A673 (cell line): ENCODE measurements at regions of chr4 and their contacts with region 1.

Region 1: GRCh38 chr4:153643406-153644383 is 40.4 kb upstream of the TLR2 start:
- DNase-seq: peak; percentile 80
- H3K4me3 ChIP-seq: no peak overlapping the region
- H3K27ac ChIP-seq: no peak overlapping the region
- H3K4me1 ChIP-seq: no peaks in the 10 kb centered on the region
- H3K27me3 ChIP-seq: no peaks in the 10 kb centered on the region
- CTCF ChIP-seq: peak; percentile 70

Region 2: GRCh38 chr4:153432968-153433753 is 210.5 kb before region 1 on chr4:
- CTCF ChIA-PET with region 1: interaction called, 3 read pairs
- POLR2A ChIA-PET with region 1: no interaction called
- intact Hi-C with region 1: loop called (anchors 10 kb)
- DNase-seq: peak; percentile 81
- H3K4me3 ChIP-seq: no peak overlapping the region
- H3K27ac ChIP-seq: no peak overlapping the region
- H3K4me1 ChIP-seq: peaks cover 4% of the 10 kb centered on the region
- H3K27me3 ChIP-seq: no peaks in the 10 kb centered on the region
- CTCF ChIP-seq: peak; percentile 76